ENCODE measurements at regions of chr15 and their contacts with region 1.

Region 1: GRCh38 chr15:85296615-85297402 is 83.6 kb upstream of the AKAP13 start:
- DNase-seq: peak; percentile 85
- H3K4me3 Mint-ChIP-seq: peak overlapping the region; percentile 51
- H3K27ac Mint-ChIP-seq: no peak overlapping the region
- H3K4me1 Mint-ChIP-seq: peaks cover 10% of the 10 kb centered on the region
- H3K27me3 Mint-ChIP-seq: no peaks in the 10 kb centered on the region

Region 2: GRCh38 chr15:84904419-84904818 is 392.4 kb before region 1 on chr15:
- CTCF ChIA-PET with region 1: no interaction called
- intact Hi-C with region 1: no loop called
- DNase-seq: no peak
- H3K4me3 Mint-ChIP-seq: no peak overlapping the region
- H3K27ac Mint-ChIP-seq: no peak overlapping the region
- H3K4me1 Mint-ChIP-seq: no peaks in the 10 kb centered on the region
- H3K27me3 Mint-ChIP-seq: no peaks in the 10 kb centered on the region

Region 3: DNA sequence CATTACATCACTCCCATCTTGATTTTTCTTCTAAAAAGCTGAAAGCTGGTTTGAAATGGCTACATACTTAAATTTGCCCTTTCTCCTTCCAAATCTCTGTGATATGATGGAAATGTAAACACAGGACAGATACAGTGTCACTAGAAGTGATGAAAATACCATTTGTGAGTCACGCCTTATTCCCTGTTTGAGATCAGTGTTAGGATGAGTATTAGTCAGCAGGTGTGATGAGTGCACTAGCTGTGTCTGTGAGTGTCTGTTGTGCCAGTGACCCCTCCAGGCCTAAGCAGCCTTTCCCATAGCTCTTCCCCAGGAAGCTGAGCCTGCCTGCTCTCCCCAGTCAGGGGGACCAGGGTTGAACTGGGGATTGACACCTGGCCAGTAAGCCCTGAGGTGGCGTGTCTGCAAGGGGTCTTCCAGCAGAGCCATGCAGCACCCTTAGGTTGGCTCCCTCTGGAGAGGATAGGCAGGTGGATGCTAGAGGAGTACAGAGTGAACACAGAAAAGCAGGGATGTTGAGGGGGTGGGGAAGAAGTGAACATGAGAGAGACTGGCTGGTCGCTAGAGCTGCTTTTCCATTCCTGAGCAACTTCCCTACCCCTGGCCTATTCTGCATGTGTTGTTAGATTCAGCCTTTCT is 223.1 kb before region 1 on chr15:
- CTCF ChIA-PET with region 1: no interaction called
- intact Hi-C with region 1: no loop called
- DNase-seq: peak; percentile 64
- H3K4me3 Mint-ChIP-seq: no peak overlapping the region
- H3K27ac Mint-ChIP-seq: peak overlapping the region; percentile 74
- H3K4me1 Mint-ChIP-seq: peaks cover 22% of the 10 kb centered on the region
- H3K27me3 Mint-ChIP-seq: no peaks in the 10 kb centered on the region

Region 4: DNA sequence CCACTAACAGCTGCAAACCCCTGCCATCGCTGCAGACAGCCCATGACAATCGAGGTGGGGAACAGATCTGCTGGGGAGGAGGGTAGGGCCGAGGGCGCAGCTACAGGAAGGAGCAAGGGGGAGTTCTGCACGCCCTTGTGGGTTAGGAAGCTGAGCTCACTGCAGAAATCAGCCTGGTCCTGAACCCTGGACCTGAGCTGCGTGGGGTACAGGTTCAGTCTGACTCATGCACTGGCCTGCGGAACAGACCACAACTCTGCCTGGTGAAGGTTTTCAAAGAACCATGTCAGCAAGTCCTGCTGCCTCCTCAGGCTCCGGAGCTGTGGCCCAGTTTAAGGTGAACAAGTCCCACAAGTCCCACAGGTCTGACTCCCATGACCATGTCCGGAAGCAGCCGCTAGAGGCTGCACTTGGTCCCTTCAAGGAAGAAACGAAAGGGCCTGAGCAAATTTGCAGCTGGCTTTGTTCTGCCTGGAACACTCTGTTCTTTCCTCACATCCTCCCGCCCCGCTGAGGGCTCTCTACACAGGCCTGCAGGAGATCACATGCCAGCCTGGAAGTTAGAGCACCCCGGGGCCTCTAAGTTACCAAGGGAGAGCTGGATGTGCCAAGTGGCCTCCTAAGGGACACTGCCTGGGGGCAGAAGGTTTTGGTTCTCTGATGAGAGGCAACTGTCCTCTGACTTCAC is 34.2 kb after region 1 on chr15:
- CTCF ChIA-PET with region 1: interaction called, 15 read pairs
- intact Hi-C with region 1: no loop called
- DNase-seq: peak; percentile 79
- H3K4me3 Mint-ChIP-seq: peak overlapping the region; percentile 85
- H3K27ac Mint-ChIP-seq: peak overlapping the region; percentile 6
- H3K4me1 Mint-ChIP-seq: peaks cover 22% of the 10 kb centered on the region
- H3K27me3 Mint-ChIP-seq: no peaks in the 10 kb centered on the region

Region 5: DNA sequence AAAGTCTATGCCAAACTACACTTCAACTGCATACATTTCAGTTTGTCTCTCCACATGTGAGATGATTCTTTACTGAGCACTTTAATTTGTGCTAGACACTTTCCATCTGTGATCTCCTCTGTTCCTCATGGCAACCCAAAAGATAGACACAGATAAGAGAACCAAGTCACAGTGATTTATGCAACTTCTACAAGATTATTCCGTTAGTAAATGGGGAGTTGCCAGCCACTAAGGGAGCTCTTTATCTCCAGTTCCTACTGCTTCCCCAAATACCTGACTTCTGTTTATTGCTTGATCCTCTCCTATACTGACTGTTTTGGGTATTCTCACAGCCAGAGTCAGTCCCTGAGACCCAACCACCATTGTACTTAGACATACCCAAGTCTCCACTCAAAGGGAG is 59.5 kb after region 1 on chr15:
- CTCF ChIA-PET with region 1: no interaction called
- intact Hi-C with region 1: no loop called
- DNase-seq: no peak
- H3K4me3 Mint-ChIP-seq: no peak overlapping the region
- H3K27ac Mint-ChIP-seq: no peak overlapping the region
- H3K4me1 Mint-ChIP-seq: peaks cover 11% of the 10 kb centered on the region
- H3K27me3 Mint-ChIP-seq: peaks cover 2% of the 10 kb centered on the region

Region 6: GRCh38 chr15:85723960-85724945 is 427.4 kb after region 1 on chr15:
- CTCF ChIA-PET with region 1: interaction called, 4 read pairs
- intact Hi-C with region 1: loop called (anchors 5 kb)
- DNase-seq: peak; percentile 41
- H3K4me3 Mint-ChIP-seq: peak overlapping the region; percentile 43
- H3K27ac Mint-ChIP-seq: peak overlapping the region; percentile 97
- H3K4me1 Mint-ChIP-seq: peaks cover 67% of the 10 kb centered on the region
- H3K27me3 Mint-ChIP-seq: no peaks in the 10 kb centered on the region

Region 7: DNA sequence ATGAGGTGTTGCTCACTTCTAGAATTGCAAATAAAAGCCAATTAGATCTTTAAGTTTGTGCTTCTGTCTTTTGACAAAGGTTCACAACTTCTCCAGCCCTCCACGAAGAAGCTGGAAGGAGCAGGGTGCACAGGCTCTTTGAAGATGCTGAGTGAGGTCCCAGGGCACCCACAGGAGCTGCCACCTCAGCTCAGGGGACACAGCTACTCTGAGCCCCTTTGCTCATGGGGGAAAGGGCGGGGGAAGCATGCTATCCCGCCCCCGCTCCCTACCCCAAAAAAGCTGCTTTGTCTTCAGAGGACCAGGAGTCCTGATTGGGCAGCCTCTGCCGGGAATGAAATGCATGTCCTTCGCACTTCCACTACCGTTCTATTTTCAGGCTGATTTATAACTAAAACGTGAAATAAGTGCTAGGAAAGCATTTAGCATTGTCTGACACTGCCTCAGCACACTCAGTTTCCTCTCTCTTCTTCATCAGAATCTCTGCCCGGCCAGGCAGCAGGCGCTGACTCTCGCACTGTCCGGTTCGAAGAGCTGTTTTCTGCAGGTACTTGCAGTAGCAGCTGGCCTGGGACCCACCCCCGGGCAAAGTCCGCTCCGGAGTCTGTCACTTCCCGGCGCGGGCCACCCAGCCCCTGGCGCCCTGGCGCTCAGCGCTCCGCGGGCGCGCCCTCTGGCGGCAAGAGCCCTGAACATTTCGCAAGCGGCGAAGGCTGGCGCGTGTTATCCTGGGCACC is 543.4 kb after region 1 on chr15:
- CTCF ChIA-PET with region 1: interaction called, 3 read pairs
- intact Hi-C with region 1: loop called (anchors 2 kb)
- DNase-seq: peak; percentile 81
- H3K4me3 Mint-ChIP-seq: peak overlapping the region; percentile 65
- H3K27ac Mint-ChIP-seq: no peak overlapping the region
- H3K4me1 Mint-ChIP-seq: no peaks in the 10 kb centered on the region
- H3K27me3 Mint-ChIP-seq: peaks cover 3% of the 10 kb centered on the region

Measured in activated naive CD4-positive, alpha-beta T cell treated with anti-CD3 and anti-CD28 coated beads for 36 hours (primary cell).